Activated CD8-positive, alpha-beta T cell treated with anti-CD3 and anti-CD28 coated beads, Interleukin-2, amount 10 ng/mL, durations not matched to agents 7 days and 5 days (primary cell): ENCODE measurements at regions of chr9 and their contacts with region 1.

Region 1: DNA sequence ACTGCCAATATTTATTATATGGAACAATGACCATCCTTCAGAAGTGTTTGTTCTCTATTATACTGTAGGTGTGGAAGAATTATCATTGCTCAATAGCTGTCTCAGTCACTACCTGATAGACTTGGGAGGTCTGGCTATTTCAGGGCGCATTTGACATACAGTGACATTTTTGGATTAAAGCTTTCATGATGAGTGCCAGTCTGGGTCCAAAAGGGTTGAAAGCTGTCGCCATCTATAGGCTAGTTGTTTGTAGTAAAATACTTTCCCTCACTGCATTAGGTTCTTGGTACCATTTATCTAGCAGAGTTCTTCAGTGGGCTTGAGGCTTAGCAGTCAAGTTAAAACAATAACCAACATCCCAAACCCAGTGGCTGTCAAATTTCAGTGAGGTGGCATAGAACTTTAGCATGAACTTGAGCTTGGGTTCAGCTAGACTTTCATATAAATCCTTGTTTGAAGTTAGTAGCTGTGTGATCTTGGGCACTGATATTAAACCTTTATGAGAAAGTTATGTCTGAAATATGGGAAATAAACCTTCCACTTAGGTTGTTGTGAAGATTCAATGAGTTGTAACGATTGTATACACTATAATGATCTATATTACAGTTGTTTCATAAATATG is 110.5 kb upstream of the CDKN2B start:
- DNase-seq: peak; percentile 56
- ATAC-seq: peak; percentile 91
- H3K4me3 Mint-ChIP-seq: no peak overlapping the region
- H3K27ac Mint-ChIP-seq: no peak overlapping the region
- H3K4me1 Mint-ChIP-seq: peaks cover 35% of the 10 kb centered on the region
- H3K27me3 Mint-ChIP-seq: peaks cover 41% of the 10 kb centered on the region

Region 2: DNA sequence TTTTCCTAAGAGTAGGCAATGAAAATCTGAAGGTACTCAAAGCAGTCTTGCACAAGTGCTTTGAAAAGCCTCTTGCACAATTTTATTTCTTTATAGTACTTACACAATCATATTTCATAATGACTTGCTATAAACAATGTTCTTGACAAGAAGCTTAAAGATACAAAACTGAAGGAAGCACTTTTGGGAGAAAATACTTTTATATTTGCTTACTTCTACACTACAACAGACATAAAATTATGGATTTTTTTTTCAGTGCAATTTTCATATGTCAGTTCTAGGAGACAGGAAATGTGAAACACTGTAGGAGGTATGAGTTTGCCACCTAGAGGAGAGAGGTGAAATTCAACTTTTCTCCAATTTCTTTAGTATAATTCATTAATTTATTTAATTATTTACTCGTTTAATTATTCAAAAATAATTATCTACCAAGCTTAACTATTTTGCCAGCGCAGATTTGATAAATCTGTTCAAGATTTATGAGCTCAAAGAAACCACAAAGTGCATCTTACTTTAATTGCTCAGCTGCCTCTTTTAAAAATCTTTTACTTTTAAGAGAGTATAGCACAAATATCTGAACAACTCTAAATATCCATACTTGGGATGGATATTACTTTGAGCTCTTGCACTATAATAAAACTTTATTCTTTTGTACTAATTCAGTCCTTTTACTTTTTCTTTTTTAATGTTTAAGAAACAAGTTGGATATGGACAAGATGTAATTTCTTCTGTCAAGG is 81.5 kb before region 1 on chr9:
- CTCF ChIA-PET with region 1: interaction called, 77 read pairs
- POLR2A ChIA-PET with region 1: interaction called, 4 read pairs
- DNase-seq: no peak
- ATAC-seq: no peak
- H3K4me3 Mint-ChIP-seq: no peak overlapping the region
- H3K27ac Mint-ChIP-seq: no peak overlapping the region
- H3K4me1 Mint-ChIP-seq: peaks cover 58% of the 10 kb centered on the region
- H3K27me3 Mint-ChIP-seq: peaks cover 14% of the 10 kb centered on the region

Region 3: DNA sequence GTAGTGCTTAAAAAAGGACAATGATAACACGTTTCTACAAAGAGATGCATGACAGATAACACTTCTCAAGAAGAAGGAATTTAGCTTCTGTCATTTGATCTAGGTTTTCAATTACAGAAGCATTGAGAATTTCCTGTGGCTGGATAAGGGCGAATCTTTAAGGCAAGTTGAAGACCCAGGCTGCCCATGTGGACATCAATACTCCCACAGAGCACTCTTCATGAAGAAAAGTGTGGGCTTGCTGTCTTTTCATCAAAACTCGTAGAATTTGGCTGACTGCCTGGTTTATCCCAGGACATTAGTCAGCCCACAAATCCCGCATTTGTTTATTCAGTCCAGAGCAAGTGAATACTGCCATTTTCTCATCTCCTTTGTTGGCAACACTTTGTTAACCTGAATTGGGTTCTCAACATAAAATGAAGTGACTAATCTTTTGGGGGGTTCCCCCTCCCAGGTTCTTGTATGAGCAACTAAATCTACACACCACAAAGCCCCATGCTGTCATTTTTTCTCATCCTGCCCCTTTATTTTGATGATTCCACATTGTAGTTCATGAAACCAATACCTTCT is 67.2 kb before region 1 on chr9:
- CTCF ChIA-PET with region 1: interaction called, 52 read pairs
- POLR2A ChIA-PET with region 1: no interaction called
- DNase-seq: peak; percentile 65
- ATAC-seq: peak; percentile 72
- H3K4me3 Mint-ChIP-seq: peak overlapping the region; percentile 9
- H3K27ac Mint-ChIP-seq: peak overlapping the region; percentile 77
- H3K4me1 Mint-ChIP-seq: peaks cover 75% of the 10 kb centered on the region
- H3K27me3 Mint-ChIP-seq: peaks cover 5% of the 10 kb centered on the region

Region 4: DNA sequence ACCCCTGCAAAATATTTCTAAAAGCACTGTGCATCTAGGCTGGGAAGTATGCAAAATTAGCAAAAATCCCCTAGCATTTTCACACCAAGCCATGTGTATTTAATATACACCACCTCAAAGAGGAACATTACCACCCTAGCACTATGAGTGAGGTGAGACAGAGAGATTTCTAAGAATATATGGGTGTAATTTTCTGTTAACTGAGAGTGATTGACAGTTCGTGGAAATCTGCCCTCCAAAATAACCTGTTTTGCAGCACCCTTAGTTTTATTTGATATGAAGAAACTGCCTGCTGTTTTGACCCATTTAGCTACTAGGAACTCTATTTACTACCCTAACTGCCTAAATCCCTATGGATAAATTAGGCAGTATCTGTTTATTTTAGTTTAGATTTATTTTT is 46.3 kb before region 1 on chr9:
- CTCF ChIA-PET with region 1: interaction called, 14 read pairs
- POLR2A ChIA-PET with region 1: no interaction called
- DNase-seq: peak; percentile 64
- ATAC-seq: peak; percentile 89
- H3K4me3 Mint-ChIP-seq: no peak overlapping the region
- H3K27ac Mint-ChIP-seq: peak overlapping the region; percentile 63
- H3K4me1 Mint-ChIP-seq: peaks cover 73% of the 10 kb centered on the region
- H3K27me3 Mint-ChIP-seq: no peaks in the 10 kb centered on the region

Region 5: DNA sequence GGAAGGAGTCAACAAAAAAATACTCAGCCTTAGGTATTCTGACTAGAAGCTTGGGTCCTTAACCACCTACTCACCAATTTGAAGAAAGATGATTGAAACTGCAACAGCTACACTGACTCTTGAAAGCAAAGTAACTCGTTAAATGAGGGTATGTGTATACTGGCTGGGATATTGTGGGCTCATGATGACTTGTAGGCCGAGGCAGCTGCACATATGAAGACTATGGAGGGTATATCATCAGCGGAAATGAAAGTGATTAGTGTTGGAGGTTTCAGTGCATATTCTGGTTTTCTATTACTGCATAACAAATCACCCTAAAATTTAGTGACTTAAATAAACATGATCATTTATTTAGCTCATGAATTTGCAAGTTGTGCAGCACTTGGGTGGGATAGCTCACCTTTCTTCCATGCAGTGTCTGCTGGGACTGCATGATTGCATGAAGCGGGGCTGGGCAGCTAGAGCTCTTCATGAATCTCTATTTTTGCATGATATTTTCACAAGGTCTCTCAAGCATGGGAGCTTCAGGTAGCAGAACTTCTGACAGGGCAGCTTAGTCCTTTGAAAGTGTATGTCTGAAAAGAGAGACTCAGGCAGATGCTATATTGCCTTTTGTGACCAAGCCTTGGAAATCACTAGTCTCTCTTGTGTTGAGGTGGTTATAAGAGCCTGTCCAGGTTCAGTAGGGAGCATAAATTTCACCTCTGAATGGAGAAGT is 14.5 kb before region 1 on chr9:
- CTCF ChIA-PET with region 1: interaction called, 39 read pairs
- POLR2A ChIA-PET with region 1: no interaction called
- DNase-seq: no peak
- ATAC-seq: peak; percentile 67
- H3K4me3 Mint-ChIP-seq: no peak overlapping the region
- H3K27ac Mint-ChIP-seq: peak overlapping the region; percentile 4
- H3K4me1 Mint-ChIP-seq: peaks cover 52% of the 10 kb centered on the region
- H3K27me3 Mint-ChIP-seq: peaks cover 4% of the 10 kb centered on the region